MCF 10A (cell line): ENCODE measurements at regions of chr3 and their contacts with region 1.

Region 1: GRCh38 chr3:113514265-113514769 is 639 bp downstream of the SPICE1 start:
- DNase-seq: no peak
- H3K4me3 Mint-ChIP-seq: no peak overlapping the region
- H3K27ac Mint-ChIP-seq: no peak overlapping the region
- H3K4me1 Mint-ChIP-seq: peaks cover 5% of the 10 kb centered on the region
- H3K27me3 Mint-ChIP-seq: peaks cover 9% of the 10 kb centered on the region
- CTCF ChIP-seq: no peak

Region 2: GRCh38 chr3:113531826-113532697 is 17.7 kb after region 1 on chr3 and contains the start of gene SIDT1:
- CTCF ChIA-PET with region 1: interaction called, 3 read pairs
- POLR2A ChIA-PET with region 1: interaction called, 46 read pairs
- intact Hi-C with region 1: no loop called
- DNase-seq: peak; percentile 35
- H3K4me3 Mint-ChIP-seq: peak within 1 kb of the TSS; percentile 83
- H3K27ac Mint-ChIP-seq: peak within 1 kb of the TSS; percentile 11
- H3K4me1 Mint-ChIP-seq: peaks cover 20% of the 10 kb centered on the region
- H3K27me3 Mint-ChIP-seq: peaks cover 69% of the 10 kb centered on the region
- CTCF ChIP-seq: no peak
- total RNA-seq, gene SIDT1: 0.22 and 0.28 TPM in 2 replicates

Region 3: GRCh38 chr3:113575206-113575605 is 60.9 kb after region 1 on chr3:
- CTCF ChIA-PET with region 1: interaction called, 10 read pairs
- POLR2A ChIA-PET with region 1: interaction called, 12 read pairs
- intact Hi-C with region 1: no loop called
- DNase-seq: no peak
- H3K4me3 Mint-ChIP-seq: no peak overlapping the region
- H3K27ac Mint-ChIP-seq: no peak overlapping the region
- H3K4me1 Mint-ChIP-seq: no peaks in the 10 kb centered on the region
- H3K27me3 Mint-ChIP-seq: peaks cover 27% of the 10 kb centered on the region
- CTCF ChIP-seq: no peak

Region 4: DNA sequence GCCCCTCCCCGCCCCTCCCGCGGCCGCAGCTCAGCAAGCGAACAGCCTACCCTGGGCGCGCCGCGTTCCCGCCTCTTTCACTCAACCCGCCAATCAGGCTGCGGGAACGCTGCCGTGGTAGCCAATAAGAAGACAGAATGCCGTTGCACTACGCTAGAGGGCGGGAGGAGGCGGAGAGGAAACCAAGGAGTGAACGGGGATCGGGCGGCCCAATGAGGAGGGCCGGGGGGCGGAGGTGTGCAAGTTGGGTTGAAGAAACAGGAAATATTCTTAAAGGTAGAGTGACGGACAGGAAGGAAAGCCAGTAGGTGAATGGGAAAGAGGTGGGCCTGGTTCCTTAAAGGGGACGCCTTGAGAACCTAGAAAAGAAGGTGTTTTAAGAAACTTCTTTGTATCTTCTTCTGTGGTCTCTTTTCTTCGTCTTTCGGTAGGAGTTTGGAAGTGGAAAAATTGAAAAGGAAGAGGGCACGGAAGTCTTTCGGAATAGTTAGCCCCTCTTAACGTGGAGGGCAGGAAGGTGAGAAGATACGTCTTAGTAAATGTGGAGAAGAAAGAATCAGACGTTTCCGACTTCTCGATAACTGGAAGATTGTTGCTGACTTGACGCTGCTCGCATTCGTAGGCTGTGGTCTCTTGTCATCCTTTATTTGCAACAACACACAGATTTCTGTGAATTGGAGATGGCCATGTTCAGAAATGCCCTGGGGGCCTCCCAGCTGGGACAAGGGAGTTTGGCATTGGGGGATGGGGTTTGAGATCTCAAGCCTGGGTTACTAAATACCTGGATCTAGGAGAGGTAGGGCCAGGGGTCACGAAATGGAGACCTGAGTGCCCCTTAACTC is 182.6 kb after region 1 on chr3:
- CTCF ChIA-PET with region 1: interaction called, 4 read pairs
- POLR2A ChIA-PET with region 1: interaction called, 41 read pairs
- intact Hi-C with region 1: no loop called
- DNase-seq: peak; percentile 99
- H3K4me3 Mint-ChIP-seq: no peak overlapping the region
- H3K27ac Mint-ChIP-seq: no peak overlapping the region
- H3K4me1 Mint-ChIP-seq: peaks cover 22% of the 10 kb centered on the region
- H3K27me3 Mint-ChIP-seq: no peaks in the 10 kb centered on the region
- CTCF ChIP-seq: no peak